ENCODE measurements at regions of chr2 and their contacts with region 1.

Region 1: DNA sequence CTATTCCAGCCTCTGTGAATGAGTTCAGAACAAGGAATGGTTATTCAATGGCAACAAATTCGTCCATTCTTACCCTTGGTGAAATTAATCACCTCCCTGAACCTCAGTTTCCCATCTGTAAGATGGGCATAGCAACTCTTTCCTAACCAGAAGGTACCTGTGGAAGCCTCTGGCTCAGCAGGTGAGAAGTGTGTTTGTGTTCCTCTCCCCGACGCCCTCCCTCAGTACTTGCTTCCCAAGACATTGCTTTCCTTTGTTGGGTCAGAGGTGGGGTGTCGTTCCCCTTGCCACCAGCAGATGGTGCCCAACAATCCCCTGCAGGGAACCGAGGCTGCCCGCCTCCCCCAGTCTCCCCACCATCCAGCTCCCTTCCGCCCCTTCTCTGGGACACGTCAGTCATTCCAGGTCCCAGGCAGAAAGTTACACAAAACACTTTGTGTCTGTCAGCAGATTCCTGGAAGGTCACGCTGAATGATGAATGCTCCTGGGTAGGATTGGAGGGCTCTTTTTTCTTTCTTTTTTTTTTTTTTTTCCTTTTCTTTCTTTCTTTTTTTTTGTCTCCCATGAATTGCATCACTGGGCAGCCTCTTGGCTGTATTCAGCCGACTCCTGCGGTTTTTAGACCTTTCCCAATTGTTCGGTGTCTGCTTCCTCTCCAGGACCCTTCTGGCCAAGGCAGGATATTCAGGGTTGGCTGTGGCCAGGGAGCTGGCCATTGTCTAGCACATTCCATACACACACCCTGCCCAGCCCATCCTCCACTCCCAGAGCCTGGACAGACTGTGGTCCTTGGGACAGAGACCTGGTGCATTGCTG is 117.3 kb downstream of the LPIN1 start:
- DNase-seq: peak; percentile 89
- ATAC-seq: peak; percentile 94

Region 2: GRCh38 chr2:12320991-12321641 is 457.4 kb after region 1 on chr2:
- intact Hi-C with region 1: loop called (anchors 5 kb)
- DNase-seq: peak; percentile 66
- ATAC-seq: peak; percentile 86

Region 3: DNA sequence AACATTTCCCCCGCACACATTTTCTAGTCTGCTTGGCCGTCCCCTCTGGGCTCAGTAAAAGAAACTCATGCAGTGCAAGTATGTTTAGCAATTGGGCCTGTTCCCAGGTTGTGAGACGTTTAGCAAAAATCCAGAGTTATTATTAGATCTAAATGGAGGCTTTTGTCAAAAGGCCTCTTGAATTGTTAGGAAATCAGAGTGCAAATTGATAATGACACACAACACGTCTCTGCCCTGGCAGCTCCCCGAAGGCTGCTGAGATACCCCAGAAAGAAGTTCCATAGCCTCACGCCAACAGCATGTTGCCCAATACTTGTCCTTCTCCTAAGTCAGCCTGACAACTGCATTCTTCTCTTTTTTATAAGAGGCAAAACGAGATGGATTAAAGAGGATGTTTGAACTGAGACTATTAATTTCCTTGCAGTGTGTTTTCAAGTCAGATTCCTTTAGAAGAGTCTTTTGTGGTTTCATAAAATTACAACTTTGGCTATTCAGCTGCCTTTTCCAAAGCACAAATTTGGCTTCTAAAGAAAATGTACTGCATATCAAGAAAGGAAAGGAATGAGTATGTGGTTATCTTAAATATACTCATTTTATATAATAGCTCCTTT is 1055.2 kb after region 1 on chr2:
- intact Hi-C with region 1: no loop called
- DNase-seq: peak; percentile 84
- ATAC-seq: peak; percentile 95

Measured in Right ventricle myocardium superior (tissue), 1 donor.